ENCODE measurements at regions of chr9 and their contacts with region 1.

Region 1: DNA sequence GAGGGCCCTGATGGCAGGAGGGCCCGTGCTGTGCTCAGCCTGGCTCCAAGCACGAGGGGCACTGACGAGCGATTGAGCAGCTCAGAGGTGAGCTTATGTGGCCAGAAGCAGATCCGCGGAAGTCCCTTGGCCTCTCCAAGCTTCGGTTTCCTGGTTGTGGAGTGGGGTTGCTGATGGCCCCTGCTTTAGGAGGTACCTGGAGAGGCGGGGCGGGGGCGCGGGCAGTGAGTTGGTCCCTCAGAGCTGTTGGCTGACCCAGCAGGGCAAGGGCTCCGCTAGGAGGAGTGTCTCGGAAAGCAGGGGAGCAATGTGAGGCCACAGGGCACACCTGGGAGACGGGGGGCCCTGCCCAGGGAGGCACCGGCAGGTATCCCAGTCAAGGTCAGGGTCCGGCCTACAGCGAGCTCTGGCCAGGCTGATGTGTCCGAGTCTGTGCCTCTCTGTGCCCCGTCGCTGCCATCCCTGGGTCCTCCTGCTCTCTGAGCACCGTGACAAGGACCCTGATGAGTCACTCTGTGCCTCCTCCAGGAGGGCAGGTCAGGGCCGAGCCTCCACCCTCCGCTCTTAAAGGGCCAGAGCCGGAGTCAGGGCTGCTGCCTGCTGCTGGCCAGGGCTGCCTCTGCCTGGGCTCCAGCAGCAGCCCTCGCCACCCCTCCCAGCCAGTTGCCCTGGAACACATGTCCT is 14.8 kb downstream of the NCS1 start:
- DNase-seq: peak; percentile 75 to 86
- H3K4me3 ChIP-seq: peak overlapping the region; percentile 55
- H3K27ac ChIP-seq: no peak overlapping the region
- H3K4me1 ChIP-seq: peaks cover 11% of the 10 kb centered on the region
- H3K27me3 ChIP-seq: no peaks in the 10 kb centered on the region
- CTCF ChIP-seq: no peak

Region 2: GRCh38 chr9:130118841-130119518 is 68.0 kb before region 1 on chr9:
- CTCF ChIA-PET with region 1: no interaction called
- POLR2A ChIA-PET with region 1: no interaction called
- intact Hi-C with region 1: loop called (anchors 2 kb)
- DNase-seq: peak in 1 of 2 experiments; percentile 85
- H3K4me3 ChIP-seq: no peak overlapping the region
- H3K27ac ChIP-seq: no peak overlapping the region
- H3K4me1 ChIP-seq: peaks cover 13% of the 10 kb centered on the region
- H3K27me3 ChIP-seq: no peaks in the 10 kb centered on the region
- CTCF ChIP-seq: no peak

Region 3: DNA sequence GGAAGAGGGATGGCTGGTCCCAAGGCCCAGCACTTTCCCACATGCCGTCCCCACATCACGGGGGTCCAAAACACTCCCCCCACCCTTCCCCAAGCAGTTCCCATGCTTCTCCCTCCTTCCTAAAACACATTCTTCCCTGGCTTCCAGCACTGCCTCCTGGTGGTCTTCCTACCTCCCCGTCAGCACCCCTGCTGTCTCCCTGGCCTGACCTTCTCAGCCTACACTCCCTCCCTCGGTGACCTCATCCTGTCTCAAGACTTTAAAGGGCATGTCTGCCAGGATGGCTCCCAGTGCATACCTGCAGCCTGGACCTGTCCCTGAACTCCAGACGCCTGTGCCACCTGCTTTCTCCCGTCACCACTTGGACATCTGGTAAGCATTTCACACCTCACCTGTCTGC is 19.1 kb before region 1 on chr9:
- CTCF ChIA-PET with region 1: no interaction called
- POLR2A ChIA-PET with region 1: no interaction called
- intact Hi-C with region 1: no loop called
- DNase-seq: no peak
- H3K4me3 ChIP-seq: no peak overlapping the region
- H3K27ac ChIP-seq: no peak overlapping the region
- H3K4me1 ChIP-seq: peaks cover 4% of the 10 kb centered on the region; the same call in 1 of the 2 replicates
- H3K27me3 ChIP-seq: no peaks in the 10 kb centered on the region
- CTCF ChIP-seq: no peak

Region 4: DNA sequence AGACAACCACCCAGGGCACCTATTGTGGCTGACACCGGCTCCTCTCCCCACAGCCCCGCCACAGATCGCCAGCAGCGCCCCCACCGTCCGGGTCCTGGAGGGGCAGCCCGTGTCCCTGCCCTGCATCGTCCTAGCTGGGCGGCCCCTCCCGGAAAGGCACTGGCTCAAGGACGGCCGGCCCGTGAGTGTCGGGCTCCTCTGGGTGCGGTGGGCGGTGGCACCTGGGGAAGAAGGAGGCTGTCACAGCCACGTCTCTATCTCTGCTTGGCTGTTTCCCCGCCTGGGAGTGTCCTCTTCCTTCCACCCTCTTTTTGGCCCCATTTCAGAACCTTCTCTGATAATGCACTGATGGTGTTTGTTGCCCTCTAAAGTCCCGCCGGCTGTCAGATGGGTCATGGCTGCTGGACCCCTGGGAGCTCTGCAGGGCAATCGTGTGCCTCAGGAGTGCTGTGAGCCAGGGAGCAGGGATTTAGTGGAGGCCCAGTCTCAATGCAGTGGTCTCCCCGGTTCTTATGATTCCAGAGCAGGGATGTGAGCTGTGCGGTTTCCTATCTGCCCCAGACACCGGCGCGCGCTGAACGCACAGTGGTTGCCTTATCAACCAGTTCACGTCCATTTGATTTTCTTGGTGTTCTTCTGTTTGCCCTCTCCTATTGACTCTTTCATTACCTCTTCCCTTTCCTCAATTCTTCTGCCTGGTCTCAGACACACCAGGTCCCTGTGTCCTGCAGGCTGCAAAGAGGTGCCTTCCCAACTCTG is 133.9 kb after region 1 on chr9:
- CTCF ChIA-PET with region 1: no interaction called
- POLR2A ChIA-PET with region 1: no interaction called
- intact Hi-C with region 1: no loop called
- DNase-seq: peak in 1 of 2 experiments; percentile 29
- H3K4me3 ChIP-seq: no peak overlapping the region
- H3K27ac ChIP-seq: no peak overlapping the region
- H3K4me1 ChIP-seq: no peaks in the 10 kb centered on the region
- H3K27me3 ChIP-seq: peaks cover 51% of the 10 kb centered on the region
- CTCF ChIP-seq: no peak

Measured in PC-9 (cell line).